Panc1 (cell line): ENCODE measurements at regions of chr13 and their contacts with region 1.

Region 1: GRCh38 chr13:40251343-40252032 is 415.0 kb downstream of the FOXO1 start:
- DNase-seq: no peak
- ATAC-seq: no peak
- H3K4me3 ChIP-seq: no peak overlapping the region
- H3K27ac ChIP-seq: no peak overlapping the region
- H3K4me1 ChIP-seq: no peaks in the 10 kb centered on the region
- H3K27me3 ChIP-seq: no peaks in the 10 kb centered on the region
- CTCF ChIP-seq: no peak

Region 2: GRCh38 chr13:40082639-40083038 is 168.8 kb before region 1 on chr13:
- CTCF ChIA-PET with region 1: no interaction called
- POLR2A ChIA-PET with region 1: no interaction called
- in situ Hi-C with region 1: no loop called
- intact Hi-C with region 1: no loop called
- DNase-seq: no peak
- ATAC-seq: no peak
- H3K4me3 ChIP-seq: no peak overlapping the region
- H3K27ac ChIP-seq: no peak overlapping the region
- H3K4me1 ChIP-seq: no peaks in the 10 kb centered on the region
- H3K27me3 ChIP-seq: no peaks in the 10 kb centered on the region
- CTCF ChIP-seq: no peak

Region 3: DNA sequence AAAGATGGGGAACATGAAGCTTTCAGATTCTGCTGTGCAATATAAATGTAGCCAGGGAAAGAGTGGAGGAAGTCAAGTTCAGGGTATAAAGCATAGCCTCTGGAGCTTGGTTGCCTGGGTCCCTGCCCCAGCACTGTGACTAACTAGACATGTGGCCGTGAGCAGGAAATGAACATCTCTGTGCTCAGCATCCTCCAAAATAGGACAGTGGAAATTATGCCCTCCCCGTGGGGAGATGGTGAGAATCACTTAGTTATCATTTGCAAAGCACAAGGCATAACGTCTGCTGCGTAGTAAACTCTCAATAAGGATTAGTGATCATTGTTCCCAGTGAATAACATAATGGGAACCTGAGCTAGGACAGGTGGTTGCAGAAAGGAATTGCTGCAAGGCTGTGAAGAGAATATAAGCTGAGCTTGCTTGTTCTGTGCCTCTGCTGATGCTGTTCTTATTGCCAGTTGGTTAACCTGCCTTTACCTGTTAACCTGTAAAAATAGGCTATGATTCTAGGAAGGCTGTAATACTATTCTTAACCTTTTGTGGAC is 155.1 kb before region 1 on chr13:
- CTCF ChIA-PET with region 1: no interaction called
- POLR2A ChIA-PET with region 1: no interaction called
- in situ Hi-C with region 1: no loop called
- intact Hi-C with region 1: no loop called
- DNase-seq: no peak
- ATAC-seq: no peak
- H3K4me3 ChIP-seq: no peak overlapping the region
- H3K27ac ChIP-seq: no peak overlapping the region
- H3K4me1 ChIP-seq: no peaks in the 10 kb centered on the region
- H3K27me3 ChIP-seq: no peaks in the 10 kb centered on the region
- CTCF ChIP-seq: no peak

Region 4: DNA sequence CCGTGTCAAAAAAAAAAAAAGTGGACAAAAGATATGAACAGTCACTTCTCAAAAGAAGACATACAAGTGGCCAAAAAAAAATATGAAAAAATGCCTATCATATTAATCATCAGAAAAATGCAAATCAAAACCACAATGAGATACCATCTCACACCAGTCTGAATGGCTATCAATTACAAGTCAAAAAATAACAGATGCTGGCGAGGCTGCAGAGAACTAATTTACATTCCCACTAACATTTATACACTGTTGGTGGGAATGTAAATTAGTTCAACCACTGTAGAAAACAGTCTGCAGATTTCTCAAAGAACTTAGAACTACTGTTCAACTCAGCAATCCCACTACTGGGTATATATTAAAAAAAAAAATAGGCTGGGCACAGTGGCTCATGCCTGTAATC is 441.5 kb after region 1 on chr13:
- CTCF ChIA-PET with region 1: interaction called, 10 read pairs
- POLR2A ChIA-PET with region 1: no interaction called
- in situ Hi-C with region 1: no loop called
- intact Hi-C with region 1: no loop called
- DNase-seq: no peak
- ATAC-seq: no peak
- H3K4me3 ChIP-seq: no peak overlapping the region
- H3K27ac ChIP-seq: no peak overlapping the region
- H3K4me1 ChIP-seq: no peaks in the 10 kb centered on the region
- H3K27me3 ChIP-seq: no peaks in the 10 kb centered on the region
- CTCF ChIP-seq: no peak